Activated T-helper 1 cell treated with anti-CD3 and anti-CD28 coated beads, Interleukin-12 subunit alpha, Interleukin-12 subunit beta, Interleukin-2, Interleukin-4 antibody, amounts not matched to agents 30 ng/mL and 10 ng/mL and 1 ng/mL, durations not matched to agents 14 hours and 24 hours and 36 hours (primary cell): ENCODE measurements at regions of chr3 and their contacts with region 1.

Region 1: DNA sequence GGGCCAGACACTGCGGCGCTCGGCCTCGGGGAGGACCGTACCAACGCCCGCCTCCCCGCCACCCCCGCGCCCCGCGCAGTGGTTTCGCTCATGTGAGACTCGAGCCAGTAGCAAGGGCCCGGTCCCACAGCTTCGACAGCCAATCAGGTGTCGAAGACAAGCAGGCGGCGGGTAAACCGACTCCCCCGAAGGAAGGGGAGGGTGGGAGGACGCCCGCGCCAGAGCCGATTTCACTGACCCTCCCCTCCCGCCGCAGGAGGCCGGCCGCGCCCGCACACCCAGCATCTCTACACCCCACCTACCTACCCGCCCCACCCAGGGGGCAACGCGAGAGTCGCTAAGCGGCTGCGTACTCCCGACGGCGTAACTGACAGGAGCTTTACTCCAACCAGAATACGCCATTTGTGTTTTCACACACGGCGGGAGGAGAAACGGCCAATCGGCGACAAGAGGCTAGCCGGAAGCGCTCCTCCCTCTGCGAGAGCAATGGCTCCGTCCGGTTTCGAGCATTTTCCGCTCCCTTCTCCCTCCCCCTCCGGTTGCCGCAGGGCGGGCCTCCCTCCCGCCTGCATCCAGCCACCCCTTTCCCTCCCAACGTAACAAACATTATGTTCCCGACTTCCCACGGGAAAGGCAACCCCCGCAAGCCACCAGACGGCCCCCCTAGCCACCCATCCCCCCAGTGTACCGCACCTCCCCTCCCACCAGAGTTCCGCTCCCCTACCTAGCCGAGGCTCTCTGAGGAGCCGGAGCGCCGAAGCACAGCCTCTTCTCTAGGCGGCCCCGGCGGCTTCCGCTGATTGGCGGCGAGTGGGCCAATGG is 504 bp upstream of the SETD5 start:
- DNase-seq: peak; percentile 98
- H3K4me3 Mint-ChIP-seq: peak overlapping the region; percentile 94
- H3K27ac Mint-ChIP-seq: peak overlapping the region; percentile 98
- H3K4me1 Mint-ChIP-seq: peaks cover 65% of the 10 kb centered on the region
- H3K27me3 Mint-ChIP-seq: no peaks in the 10 kb centered on the region

Region 2: GRCh38 chr3:9362731-9363530 is 34.0 kb before region 1 on chr3 and contains the start of gene THUMPD3:
- intact Hi-C with region 1: loop called (anchors 1 kb)
- DNase-seq: peak; percentile 90
- H3K4me3 Mint-ChIP-seq: peak within 1 kb of the TSS; percentile 96
- H3K27ac Mint-ChIP-seq: peak within 1 kb of the TSS; percentile 98
- H3K4me1 Mint-ChIP-seq: peaks cover 6% of the 10 kb centered on the region
- H3K27me3 Mint-ChIP-seq: peaks cover 2% of the 10 kb centered on the region
- total RNA-seq, gene THUMPD3: 61.4 and 62.4 TPM in 2 replicates

Region 3: DNA sequence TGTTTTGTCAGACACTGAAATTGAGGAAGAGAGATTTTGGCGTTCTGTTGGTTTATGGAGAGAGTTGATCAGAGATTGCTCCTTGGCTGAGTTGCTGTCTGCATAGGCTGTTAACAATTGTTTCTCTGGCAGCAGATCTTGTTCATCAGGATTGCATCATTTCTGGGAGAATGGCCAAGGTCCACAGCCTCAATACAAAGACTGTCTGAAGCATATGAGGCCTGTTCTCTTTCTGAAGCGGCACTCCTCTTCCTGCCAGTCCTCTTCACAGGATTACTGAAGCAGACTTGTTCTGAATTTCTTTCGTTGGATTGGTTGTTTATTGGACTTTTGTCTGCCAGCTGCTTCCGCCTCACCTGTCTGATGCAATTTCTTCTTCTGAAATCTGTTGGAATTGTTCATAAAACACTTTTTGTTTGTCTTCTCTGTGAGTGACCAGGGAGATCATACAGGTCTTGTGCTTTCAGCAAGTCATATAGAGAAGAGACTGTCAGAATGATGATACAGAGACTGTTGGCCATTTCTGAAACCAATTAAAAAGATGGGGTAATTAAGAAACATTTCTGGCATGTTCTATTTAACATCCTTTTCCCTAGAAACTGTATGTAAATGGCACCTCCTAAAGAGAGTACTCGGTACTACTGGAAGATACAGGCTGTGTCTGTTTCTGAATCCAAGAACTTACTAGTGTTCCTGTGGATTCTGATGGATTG is 26.0 kb after region 1 on chr3:
- intact Hi-C with region 1: loop called (anchors 1 kb)
- DNase-seq: no peak
- H3K4me3 Mint-ChIP-seq: peak overlapping the region; percentile 41
- H3K27ac Mint-ChIP-seq: peak overlapping the region; percentile 84
- H3K4me1 Mint-ChIP-seq: peaks cover 64% of the 10 kb centered on the region
- H3K27me3 Mint-ChIP-seq: no peaks in the 10 kb centered on the region

Region 4: GRCh38 chr3:9649791-9650521 is 253.0 kb after region 1 on chr3:
- intact Hi-C with region 1: loop called (anchors 1 kb)
- DNase-seq: no peak
- H3K4me3 Mint-ChIP-seq: peak overlapping the region; percentile 93
- H3K27ac Mint-ChIP-seq: peak overlapping the region; percentile 82
- H3K4me1 Mint-ChIP-seq: peaks cover 13% of the 10 kb centered on the region
- H3K27me3 Mint-ChIP-seq: no peaks in the 10 kb centered on the region

Region 5: GRCh38 chr3:9986237-9986725 is 589.4 kb after region 1 on chr3:
- intact Hi-C with region 1: loop called (anchors 2 kb)
- DNase-seq: no peak
- H3K4me3 Mint-ChIP-seq: peak overlapping the region; percentile 97
- H3K27ac Mint-ChIP-seq: peak overlapping the region; percentile 98
- H3K4me1 Mint-ChIP-seq: peaks cover 27% of the 10 kb centered on the region
- H3K27me3 Mint-ChIP-seq: no peaks in the 10 kb centered on the region

Region 6: DNA sequence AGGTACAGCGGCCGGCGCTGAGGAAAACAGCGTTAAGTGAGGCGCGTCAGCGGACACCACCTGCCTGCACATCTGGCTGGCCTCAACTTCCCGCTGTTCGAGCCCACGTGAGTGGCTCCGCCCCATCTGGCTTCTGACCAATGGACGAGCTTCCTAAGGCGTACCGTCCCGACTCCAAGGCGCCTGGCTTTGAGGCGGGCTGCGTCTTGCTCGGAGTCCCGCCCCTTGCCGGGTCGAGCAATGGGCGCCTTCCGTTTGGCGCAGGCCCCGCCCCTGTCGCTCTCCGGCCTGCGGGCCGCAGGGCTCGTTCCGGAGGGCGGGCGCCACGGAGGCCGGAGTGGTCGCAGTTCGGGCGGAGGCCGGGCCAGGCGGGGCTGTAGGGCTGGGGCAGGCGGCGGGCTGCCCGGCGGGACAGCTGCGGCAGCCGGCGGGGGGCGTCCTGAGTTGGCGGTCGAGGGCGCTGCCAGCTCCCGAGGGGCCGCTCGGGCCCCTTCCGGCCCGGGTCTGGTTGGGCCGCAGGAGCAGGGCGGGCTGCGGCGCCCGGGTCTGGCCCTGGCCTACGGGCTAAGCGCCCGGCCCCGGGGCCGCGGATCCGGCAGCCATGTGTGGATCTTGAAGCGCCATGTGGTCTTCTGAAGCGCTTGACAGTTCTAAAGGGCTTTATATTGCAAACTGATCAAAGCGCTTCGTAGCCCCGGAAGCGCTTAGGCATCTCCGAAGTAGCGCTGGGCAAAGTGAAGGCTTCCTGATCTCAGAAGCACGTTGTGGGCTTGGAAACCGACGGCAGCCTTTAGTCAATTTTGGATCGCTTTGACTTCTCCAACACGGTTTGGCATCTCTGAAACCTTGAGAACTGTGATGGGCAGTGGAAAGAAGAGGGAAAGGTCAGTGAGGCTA is 851.5 kb after region 1 on chr3 and contains the start of gene TATDN2:
- intact Hi-C with region 1: loop called (anchors 1 kb)
- DNase-seq: peak; percentile 93
- H3K4me3 Mint-ChIP-seq: peak within 1 kb of the TSS; percentile 97
- H3K27ac Mint-ChIP-seq: peak within 1 kb of the TSS; percentile 97
- H3K4me1 Mint-ChIP-seq: peaks cover 62% of the 10 kb centered on the region
- H3K27me3 Mint-ChIP-seq: no peaks in the 10 kb centered on the region
- total RNA-seq, gene TATDN2: 80.4 and 81.5 TPM in 2 replicates